Sigmoid colon (tissue), 7 donors: ENCODE measurements at regions of chr16 and their contacts with region 1.

Region 1: DNA sequence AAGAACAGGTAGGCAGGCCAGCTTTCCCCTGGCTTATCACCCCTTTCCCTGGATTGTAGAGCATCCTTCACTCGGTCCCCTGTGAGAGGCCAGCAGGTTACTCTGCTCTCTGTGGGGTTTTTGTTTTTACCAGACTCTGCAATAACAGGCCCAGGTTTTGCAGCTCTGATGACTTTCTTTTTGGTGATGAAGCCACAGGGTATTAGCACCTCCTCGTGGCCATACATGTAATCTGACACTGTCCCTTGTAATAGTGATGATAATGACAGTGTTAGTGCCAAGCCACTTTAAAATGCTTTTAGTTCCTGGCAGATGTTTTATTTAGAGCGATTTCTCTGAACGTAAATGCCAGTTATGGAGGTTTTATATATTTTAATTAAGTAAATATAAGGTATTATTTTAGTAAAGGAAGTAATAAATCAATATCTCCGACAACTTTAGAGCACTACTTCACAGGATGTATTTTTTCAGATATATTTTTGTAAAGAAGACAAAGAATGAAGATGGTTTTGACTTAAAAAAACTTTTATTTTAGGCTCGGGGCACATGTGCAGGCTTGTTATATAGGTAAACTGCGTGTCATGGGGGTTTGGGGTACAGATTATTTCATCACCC is 38.0 kb upstream of the CPHXL start:
- DNase-seq: peak; percentile 66
- H3K4me3 ChIP-seq: no peak overlapping the region
- H3K27ac ChIP-seq: no peak overlapping the region
- H3K4me1 ChIP-seq: no peaks in the 10 kb centered on the region
- H3K27me3 ChIP-seq: no peaks in the 10 kb centered on the region
- CTCF ChIP-seq: peak; percentile 39 to 74 (median 66)
- EP300 ChIP-seq: no peak
- POLR2A ChIP-seq: no peak

Region 2: DNA sequence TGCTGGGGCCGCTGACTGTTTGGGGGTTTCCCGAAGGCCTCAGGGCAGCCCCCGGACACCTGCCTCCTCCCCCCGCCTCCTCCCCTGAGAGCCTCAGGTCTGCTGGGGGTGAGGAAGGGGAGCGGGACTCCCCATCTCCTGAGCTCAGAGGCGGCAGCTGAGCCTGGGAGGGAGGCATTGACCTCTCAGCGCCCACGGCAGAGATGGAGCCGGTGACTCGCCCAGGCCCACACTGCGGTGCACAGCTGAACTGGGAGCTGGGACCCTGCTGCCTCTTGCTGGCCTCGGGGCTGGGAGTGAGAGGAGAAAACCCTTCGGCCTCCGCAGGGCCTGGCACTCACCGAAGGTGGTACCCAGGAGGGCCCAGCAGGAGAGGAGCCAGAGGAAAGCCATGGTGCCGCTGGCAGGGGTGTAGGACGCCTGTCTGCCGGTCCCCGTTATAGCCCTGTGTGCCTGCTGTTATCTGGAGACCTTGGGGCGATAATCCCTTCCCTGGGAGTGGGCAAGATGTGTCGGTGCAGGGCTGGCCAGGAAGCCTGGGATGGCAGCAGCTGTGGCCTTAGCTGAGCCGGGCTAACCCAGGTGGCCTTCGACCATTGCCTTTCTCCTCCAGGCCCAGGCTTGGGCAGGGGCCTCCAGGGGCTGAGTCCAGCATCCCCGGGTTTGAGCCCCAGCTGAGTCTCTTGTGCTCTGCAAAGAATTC is 557.4 kb before region 1 on chr16 and contains the start of gene CTRB2:
- intact Hi-C with region 1: loop called (anchors 5 kb)
- DNase-seq: no peak
- H3K4me3 ChIP-seq: no peak within 1 kb of the TSS
- H3K27ac ChIP-seq: no peak within 1 kb of the TSS
- H3K4me1 ChIP-seq: no peaks in the 10 kb centered on the region
- H3K27me3 ChIP-seq: no peaks in the 10 kb centered on the region
- CTCF ChIP-seq: no peak
- EP300 ChIP-seq: no peak
- POLR2A ChIP-seq: no peak
- total RNA-seq, gene CTRB2: not detected

Region 3: DNA sequence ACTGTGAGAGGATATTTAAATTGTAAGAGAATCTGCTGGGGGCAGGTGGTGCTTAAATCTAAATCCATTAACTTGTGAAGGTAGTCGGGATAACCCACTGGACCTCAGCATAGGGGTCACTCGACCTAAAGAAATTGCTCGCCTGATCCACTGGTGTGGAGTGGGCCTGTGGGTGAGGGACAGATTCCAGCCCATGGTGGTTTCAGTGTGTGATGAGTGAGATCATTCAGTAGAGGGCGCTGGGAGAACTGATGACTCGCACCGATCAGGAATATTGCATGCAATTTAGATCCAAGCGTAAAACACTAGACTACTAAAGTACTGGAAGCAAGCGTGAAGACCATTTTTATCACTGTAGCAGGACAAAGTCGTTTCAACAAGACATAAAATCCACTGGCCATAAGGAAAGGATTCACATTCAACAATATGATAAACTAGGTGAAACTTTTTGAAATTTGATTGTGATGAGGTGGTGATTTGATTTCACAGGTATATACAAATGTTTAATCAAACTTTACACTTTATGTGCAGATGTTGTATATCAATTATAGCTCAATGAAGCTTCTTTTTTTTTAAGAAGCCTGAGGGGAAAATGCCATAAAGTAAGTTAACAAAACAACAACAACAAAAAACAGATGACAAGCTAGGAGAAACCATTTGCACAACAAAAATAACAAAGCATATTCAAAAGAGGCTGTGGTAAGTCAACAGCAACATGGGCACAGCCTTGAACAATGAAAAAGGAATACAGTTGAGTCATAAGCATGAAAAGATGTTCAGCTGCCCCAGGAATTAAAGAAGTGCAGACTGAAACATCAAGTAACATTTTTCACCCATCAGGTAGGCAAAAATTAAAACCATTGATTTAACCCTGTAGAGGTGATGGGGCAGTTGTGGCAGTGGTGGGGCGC is 292.3 kb before region 1 on chr16:
- intact Hi-C with region 1: loop called (anchors 2 kb)
- DNase-seq: peak; percentile 78
- H3K4me3 ChIP-seq: no peak overlapping the region
- H3K27ac ChIP-seq: no peak overlapping the region
- H3K4me1 ChIP-seq: no peaks in the 10 kb centered on the region
- H3K27me3 ChIP-seq: no peaks in the 10 kb centered on the region
- CTCF ChIP-seq: peak; percentile 63 to 81 (median 72)
- EP300 ChIP-seq: no peak
- POLR2A ChIP-seq: no peak

Region 4: DNA sequence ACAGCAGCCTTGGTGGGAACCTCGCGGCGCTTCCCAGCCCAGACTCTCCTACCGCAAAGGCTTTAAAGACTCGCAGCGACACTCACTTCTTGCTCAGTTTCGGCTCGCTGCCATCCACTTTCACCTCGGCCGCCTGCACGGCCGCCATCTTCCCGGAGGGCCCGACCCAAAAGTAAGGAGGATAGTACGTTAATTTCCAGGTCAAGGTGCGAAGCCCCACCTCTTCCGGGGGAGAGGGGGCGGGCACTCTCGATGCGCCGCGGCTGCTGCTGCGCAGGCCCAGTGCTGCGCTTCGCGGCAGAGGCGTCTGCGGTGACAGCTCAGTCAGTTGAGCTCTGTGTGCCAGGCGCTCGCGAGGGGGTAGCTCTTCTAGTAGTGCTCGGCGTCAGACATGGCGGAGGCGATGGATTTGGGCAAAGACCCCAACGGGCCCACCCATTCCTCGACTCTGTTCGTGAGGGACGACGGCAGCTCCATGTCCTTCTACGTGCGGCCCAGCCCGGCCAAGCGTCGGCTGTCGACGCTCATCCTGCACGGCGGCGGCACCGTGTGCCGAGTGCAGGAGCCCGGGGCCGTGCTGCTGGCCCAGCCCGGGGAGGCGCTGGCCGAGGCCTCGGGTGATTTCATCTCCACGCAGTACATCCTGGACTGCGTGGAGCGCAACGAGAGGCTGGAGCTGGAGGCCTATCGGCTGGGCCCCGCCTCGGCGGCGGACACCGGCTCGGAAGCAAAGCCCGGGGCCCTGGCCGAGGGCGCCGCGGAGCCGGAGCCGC is 116.6 kb before region 1 on chr16 and contains the starts of genes KARS1 and TERF2IP:
- intact Hi-C with region 1: loop called (anchors 2 kb)
- DNase-seq: peak; percentile 96
- H3K4me3 ChIP-seq: peak within 1 kb of the TSS; percentile 92 to 98 (median 94)
- H3K27ac ChIP-seq: peak within 1 kb of the TSS; percentile 96 to 100 (median 97)
- H3K4me1 ChIP-seq: peaks cover 0 to 58% (median 52%) of the 10 kb centered on the region in 4 donors
- H3K27me3 ChIP-seq: no peaks in the 10 kb centered on the region
- CTCF ChIP-seq: no peak
- EP300 ChIP-seq: no peak
- POLR2A ChIP-seq: peak; percentile 95 to 98
- total RNA-seq, gene KARS1: 98.3 to 113 (median 111) TPM
- total RNA-seq, gene TERF2IP: 49.0 to 76.0 (median 65.5) TPM